Head of caudate nucleus (tissue), 42 donors: ENCODE measurements at regions of chr9 and their contacts with region 1.

Region 1: DNA sequence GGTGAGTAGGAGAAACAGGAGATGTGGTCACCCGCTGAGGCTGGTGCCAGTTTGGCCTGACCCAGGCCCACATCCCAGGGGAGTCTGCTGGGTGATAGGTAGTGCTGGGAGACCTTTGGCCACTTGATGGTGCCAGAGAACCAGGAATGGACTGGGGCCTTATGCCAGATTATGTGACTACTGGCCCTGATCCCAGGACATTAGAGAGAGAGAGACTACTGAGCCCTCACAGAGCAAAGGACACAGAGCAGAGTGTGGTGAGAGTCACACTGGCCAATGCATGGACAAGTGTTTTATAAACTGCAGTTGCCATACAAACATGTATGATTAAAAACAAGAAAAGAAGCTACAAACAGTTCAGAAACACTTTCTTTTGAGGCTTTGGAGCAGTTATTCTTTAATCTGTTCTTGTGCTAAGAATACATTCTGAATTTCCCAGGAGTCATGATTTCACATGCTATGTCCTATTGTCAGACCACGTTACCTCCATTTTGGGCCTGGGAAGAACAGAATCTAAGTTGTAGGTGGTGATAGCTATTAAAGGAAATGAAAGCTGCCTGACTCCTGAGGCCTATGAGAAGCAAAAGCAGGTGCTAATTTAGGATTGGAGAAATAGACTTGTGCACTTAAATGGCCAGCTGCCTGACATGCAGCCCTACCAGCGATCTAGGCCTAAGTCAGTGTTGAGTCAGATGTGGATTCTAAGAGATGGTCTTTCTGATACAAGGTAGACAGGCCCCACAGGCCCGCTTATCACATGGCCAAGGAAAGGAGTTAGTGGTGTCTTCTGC is 32.6 kb upstream of the TMOD1 start:
- DNase-seq: peak; percentile 51 to 94 (median 84)

Region 2: DNA sequence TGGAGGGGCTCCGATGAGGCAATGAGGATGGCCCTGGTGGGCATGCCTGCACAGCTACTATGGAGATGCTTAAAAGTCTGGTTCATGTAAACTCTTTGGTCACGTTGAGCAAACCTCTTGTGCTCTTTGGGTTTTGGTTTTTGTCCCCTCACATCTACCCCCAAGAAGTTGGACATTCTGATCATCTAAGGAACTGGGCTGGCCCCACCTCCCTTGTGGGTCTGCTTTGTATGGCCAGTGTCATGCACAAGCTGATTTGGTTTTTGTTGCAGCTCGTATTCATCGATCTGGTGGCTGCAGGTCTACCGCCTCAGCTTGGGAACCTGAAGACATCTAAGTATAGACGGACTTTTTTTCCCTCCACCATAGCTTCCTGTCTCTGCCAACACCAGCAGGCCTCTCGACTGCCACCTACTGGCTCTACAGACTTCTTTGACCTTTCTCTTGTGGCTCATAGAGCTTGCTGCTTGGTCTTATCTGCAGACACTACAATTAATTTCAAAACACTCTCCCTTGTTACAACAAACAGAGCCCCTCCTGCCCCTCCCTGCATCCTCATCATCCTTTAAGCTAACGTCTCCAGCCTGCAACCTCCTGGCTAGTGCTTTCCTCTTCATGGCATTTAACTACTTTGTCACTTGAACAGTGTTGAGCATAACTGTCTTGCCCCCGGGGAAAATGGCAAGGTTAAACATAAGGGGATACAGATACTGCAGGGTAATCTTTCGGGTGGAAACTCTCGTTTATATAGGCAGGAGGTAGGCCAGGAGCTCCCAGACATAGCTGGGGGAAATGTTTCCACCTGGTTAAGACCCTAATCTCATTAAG is 129.8 kb after region 1 on chr9:
- intact Hi-C with region 1: loop called (anchors 5 kb)
- DNase-seq: peak; percentile 51 to 94 (median 82)

Region 3: DNA sequence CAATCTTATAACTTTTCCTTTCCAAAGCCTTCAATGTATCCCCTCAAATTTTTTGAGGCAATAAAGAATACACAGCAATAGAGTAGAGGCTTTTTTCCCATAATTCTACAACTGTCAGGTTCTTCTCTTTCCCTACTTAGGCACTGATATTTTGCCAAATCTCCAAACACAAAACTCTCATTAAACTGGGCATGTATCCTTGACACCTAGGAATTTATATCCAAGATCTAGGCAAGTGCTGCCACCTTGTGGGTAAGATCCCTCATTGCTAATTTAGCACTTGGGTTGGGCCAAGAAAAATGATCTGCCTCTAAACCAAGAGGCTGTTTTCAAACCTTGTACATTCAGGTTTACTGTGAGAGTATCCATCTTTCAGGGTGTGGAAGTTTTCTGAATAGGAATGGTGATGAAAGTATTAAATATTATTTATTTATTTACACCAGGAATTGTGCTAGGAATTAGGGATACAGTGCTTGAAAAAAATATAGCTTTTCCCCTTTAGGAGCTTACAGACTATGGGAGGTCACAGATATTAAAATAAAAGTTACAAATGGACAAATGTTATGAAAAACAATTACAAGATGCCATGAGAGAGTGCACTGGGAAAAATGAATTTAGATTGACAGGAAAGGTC is 146.7 kb after region 1 on chr9:
- intact Hi-C with region 1: loop called (anchors 5 kb)
- DNase-seq: peak in 36 of 42 donors; percentile 37 to 92 (median 76)